ENCODE measurements at regions of chr6 and their contacts with region 1.

Region 1: GRCh38 chr6:28807682-28808280 is 116.0 kb downstream of the TRIM27 start:
- DNase-seq: no peak
- H3K4me3 ChIP-seq: no peak overlapping the region
- H3K27ac ChIP-seq: no peak overlapping the region
- H3K4me1 ChIP-seq: no peaks in the 10 kb centered on the region
- H3K27me3 ChIP-seq: peaks cover 7% of the 10 kb centered on the region
- CTCF ChIP-seq: no peak
- POLR2A ChIP-seq: no peak

Region 2: GRCh38 chr6:28710466-28711191 is 97.2 kb before region 1 on chr6:
- intact Hi-C with region 1: no loop called
- DNase-seq: no peak
- H3K4me3 ChIP-seq: peak overlapping the region in 1 of 2 donors; percentile 0
- H3K27ac ChIP-seq: no peak overlapping the region
- H3K4me1 ChIP-seq: no peaks in the 10 kb centered on the region
- H3K27me3 ChIP-seq: no peaks in the 10 kb centered on the region
- CTCF ChIP-seq: no peak
- POLR2A ChIP-seq: no peak

Region 3: GRCh38 chr6:29368765-29369164 is 561.0 kb after region 1 on chr6 and contains the start of gene OR5V1:
- intact Hi-C with region 1: loop called (anchors 5 kb)
- DNase-seq: no peak
- H3K4me3 ChIP-seq: no peak within 1 kb of the TSS
- H3K27ac ChIP-seq: no peak within 1 kb of the TSS
- H3K4me1 ChIP-seq: no peaks in the 10 kb centered on the region
- H3K27me3 ChIP-seq: no peaks in the 10 kb centered on the region
- CTCF ChIP-seq: no peak
- POLR2A ChIP-seq: no peak
- total RNA-seq, gene OR5V1: not detected

Measured in vagina (tissue), 2 donors.